Activated CD8-positive, alpha-beta T cell treated with anti-CD3 and anti-CD28 coated beads for 36 hours (primary cell): ENCODE measurements at regions of chr2 and their contacts with region 1.

Region 1: DNA sequence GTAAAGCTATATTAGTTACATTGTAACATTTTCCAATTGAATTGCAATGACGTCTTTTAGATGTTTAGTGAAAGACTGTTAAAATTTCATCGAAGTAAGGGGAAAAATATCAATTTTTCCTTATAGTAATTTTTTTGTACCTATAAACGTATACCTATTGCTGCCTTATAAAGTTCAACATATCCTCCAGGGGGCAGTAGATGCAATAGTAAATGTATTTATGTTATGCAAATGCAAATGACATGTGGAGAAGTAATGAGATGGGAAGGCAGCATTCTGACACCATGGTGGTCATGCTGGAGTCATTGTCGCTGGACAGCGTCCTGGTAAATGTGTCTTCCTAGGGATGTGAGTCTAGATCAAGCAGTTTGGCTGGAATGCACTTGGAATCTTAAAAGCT is 38.7 kb downstream of the MSTN start:
- DNase-seq: peak; percentile 6
- ATAC-seq: peak; percentile 53
- H3K4me3 Mint-ChIP-seq: no peak overlapping the region
- H3K27ac Mint-ChIP-seq: no peak overlapping the region
- H3K4me1 Mint-ChIP-seq: no peaks in the 10 kb centered on the region
- H3K27me3 Mint-ChIP-seq: peaks cover 11% of the 10 kb centered on the region
- CTCF ChIP-seq: peak; percentile 64

Region 2: DNA sequence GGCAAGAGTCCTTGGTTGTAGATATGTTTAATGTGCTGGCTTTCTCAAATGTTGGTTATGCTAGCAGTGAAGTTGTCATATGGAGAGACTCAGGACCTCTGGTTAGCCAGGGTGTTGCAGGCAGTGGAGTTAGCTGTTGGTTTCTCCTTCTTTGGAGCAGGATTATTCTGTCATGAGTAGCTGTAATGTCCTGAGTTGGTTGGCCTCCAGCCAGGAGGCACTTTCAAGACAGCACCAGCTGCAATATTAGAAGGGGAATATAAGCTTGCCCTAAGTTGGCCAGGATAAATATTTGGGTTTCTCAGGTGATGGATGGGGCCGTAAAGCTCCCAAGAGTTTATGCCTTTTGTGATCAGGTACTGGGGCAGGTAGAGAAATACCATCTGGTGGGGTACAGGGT is 26.8 kb before region 1 on chr2:
- CTCF ChIA-PET with region 1: no interaction called
- POLR2A ChIA-PET with region 1: no interaction called
- intact Hi-C with region 1: no loop called
- DNase-seq: no peak
- ATAC-seq: no peak
- H3K4me3 Mint-ChIP-seq: no peak overlapping the region
- H3K27ac Mint-ChIP-seq: no peak overlapping the region
- H3K4me1 Mint-ChIP-seq: no peaks in the 10 kb centered on the region
- H3K27me3 Mint-ChIP-seq: peaks cover 4% of the 10 kb centered on the region
- CTCF ChIP-seq: no peak

Region 3: DNA sequence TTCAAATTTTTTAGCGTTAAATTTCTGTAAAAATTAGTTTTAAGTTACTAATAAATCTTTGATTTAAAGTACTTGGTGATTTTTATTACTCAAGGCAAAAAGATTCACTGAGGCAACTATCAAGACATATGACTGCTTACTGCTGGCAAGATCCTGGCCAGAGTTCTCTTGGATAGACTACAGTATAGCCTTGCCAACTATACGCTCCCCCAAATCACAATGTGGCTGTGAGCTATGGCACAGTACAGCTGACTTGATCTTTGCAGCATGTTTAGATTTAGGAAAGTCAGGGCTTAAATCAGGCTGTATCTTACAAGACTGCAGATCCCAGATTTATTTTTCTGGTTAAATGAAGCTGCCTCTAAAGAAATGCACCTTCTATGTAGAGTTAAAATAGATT is 12.2 kb after region 1 on chr2:
- CTCF ChIA-PET with region 1: interaction called, 11 read pairs
- POLR2A ChIA-PET with region 1: no interaction called
- intact Hi-C with region 1: no loop called
- DNase-seq: no peak
- ATAC-seq: no peak
- H3K4me3 Mint-ChIP-seq: no peak overlapping the region
- H3K27ac Mint-ChIP-seq: no peak overlapping the region
- H3K4me1 Mint-ChIP-seq: no peaks in the 10 kb centered on the region
- H3K27me3 Mint-ChIP-seq: peaks cover 4% of the 10 kb centered on the region
- CTCF ChIP-seq: no peak